HCT116 (cell line): ENCODE measurements at regions of chr20 and their contacts with region 1.

Region 1: GRCh38 chr20:57654363-57654997 is 34.3 kb upstream of the ZBP1 start:
- DNase-seq: peak; percentile 23
- ATAC-seq: peak; percentile 95
- H3K4me3 ChIP-seq: no peak overlapping the region
- H3K27ac ChIP-seq: no peak overlapping the region
- H3K4me1 ChIP-seq: no peaks in the 10 kb centered on the region
- H3K27me3 ChIP-seq: peaks cover 14% of the 10 kb centered on the region; the same call in 1 of the 2 replicates
- CTCF ChIP-seq: peak; percentile 65 to 85 (median 77); a peak in 5 of 6 replicates
- POLR2A ChIP-seq: no peak
- RAD21 ChIP-seq: peak; percentile 85

Region 2: GRCh38 chr20:57369596-57370325 is 284.7 kb before region 1 on chr20:
- CTCF ChIA-PET with region 1: no interaction called
- POLR2A ChIA-PET with region 1: no interaction called
- RAD21 ChIA-PET with region 1: no interaction called
- intact Hi-C with region 1: no loop called
- DNase-seq: no peak
- ATAC-seq: no peak
- H3K4me3 ChIP-seq: no peak overlapping the region
- H3K27ac ChIP-seq: no peak overlapping the region
- H3K4me1 ChIP-seq: no peaks in the 10 kb centered on the region
- H3K27me3 ChIP-seq: no peaks in the 10 kb centered on the region
- CTCF ChIP-seq: no peak
- POLR2A ChIP-seq: no peak
- RAD21 ChIP-seq: no peak

Region 3: DNA sequence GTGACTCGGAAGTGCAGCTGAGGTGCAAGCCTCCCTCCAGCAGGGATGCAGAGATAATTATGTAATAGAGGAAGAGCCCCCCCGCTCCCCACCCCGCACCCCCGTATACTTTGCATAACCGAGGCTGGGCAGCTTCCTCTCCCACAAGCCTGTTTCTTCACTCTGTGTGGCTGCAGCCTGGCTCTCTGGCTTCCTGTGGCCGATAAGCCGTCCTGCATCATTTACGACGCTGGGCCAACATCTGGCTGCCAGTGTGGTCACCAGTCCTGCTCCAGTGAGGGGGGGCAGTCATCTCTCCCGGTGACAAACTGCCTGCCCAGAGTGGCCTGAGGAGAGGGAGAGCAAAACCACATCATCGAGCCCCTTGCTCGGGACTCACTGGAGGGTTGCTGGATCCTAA is 204.1 kb before region 1 on chr20:
- CTCF ChIA-PET with region 1: no interaction called
- POLR2A ChIA-PET with region 1: no interaction called
- RAD21 ChIA-PET with region 1: no interaction called
- intact Hi-C with region 1: no loop called
- DNase-seq: no peak
- ATAC-seq: no peak
- H3K4me3 ChIP-seq: no peak overlapping the region
- H3K27ac ChIP-seq: no peak overlapping the region
- H3K4me1 ChIP-seq: peaks cover 7 to 8% of the 10 kb centered on the region in 2 experiments; a peak in 2 of 4 replicates
- H3K27me3 ChIP-seq: peaks cover 10% of the 10 kb centered on the region; the same call in 1 of the 2 replicates
- CTCF ChIP-seq: no peak
- POLR2A ChIP-seq: no peak
- RAD21 ChIP-seq: no peak

Region 4: GRCh38 chr20:58028123-58028522 is 373.6 kb after region 1 on chr20:
- CTCF ChIA-PET with region 1: no interaction called
- POLR2A ChIA-PET with region 1: no interaction called
- RAD21 ChIA-PET with region 1: no interaction called
- intact Hi-C with region 1: loop called (anchors 5 kb)
- DNase-seq: no peak
- ATAC-seq: no peak
- H3K4me3 ChIP-seq: no peak overlapping the region
- H3K27ac ChIP-seq: no peak overlapping the region
- H3K4me1 ChIP-seq: no peaks in the 10 kb centered on the region
- H3K27me3 ChIP-seq: peaks cover 45% of the 10 kb centered on the region
- CTCF ChIP-seq: peak; percentile 26 to 45 (median 42); a peak in 5 of 6 replicates
- POLR2A ChIP-seq: no peak
- RAD21 ChIP-seq: peak; percentile 65

Region 5: DNA sequence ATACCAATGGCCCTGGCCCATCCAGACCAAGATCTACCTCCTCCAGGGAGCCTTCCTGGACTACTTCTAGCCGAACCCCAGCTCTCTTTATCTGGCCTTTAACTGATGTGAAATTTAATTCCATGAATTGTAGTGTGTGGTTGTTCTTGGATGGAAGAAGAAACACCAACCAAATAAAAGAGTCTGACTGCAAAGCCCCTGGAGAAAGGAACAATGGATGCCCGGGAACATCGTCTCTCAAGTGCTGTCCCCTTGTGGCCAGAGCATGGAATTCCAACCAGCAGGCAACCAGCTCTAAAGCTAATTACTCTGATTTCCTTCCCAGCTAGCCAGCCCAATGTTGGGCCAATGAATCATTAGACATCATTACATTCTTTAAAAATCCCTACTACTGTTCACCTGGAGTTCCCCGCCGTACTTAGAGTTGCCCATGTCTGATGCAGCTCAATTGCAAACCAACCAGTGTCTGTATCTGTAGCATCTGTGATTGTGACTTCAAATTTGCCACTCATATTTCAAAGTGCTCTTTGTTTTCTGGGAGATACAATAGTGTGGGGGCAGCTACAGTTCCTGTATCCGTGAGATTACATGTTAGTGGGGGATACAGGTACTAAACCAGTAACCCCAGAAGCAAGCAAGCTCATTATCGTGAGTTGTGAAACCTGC is 432.8 kb after region 1 on chr20:
- CTCF ChIA-PET with region 1: interaction called, 22 read pairs
- POLR2A ChIA-PET with region 1: no interaction called
- RAD21 ChIA-PET with region 1: no interaction called
- intact Hi-C with region 1: loop called (anchors 1 kb)
- DNase-seq: peak; percentile 16
- ATAC-seq: peak; percentile 76
- H3K4me3 ChIP-seq: no peak overlapping the region
- H3K27ac ChIP-seq: no peak overlapping the region
- H3K4me1 ChIP-seq: no peaks in the 10 kb centered on the region
- H3K27me3 ChIP-seq: peaks cover 21% of the 10 kb centered on the region
- CTCF ChIP-seq: peak; percentile 64 to 96 (median 91); a peak in 5 of 6 replicates
- POLR2A ChIP-seq: no peak
- RAD21 ChIP-seq: peak; percentile 77

Region 6: DNA sequence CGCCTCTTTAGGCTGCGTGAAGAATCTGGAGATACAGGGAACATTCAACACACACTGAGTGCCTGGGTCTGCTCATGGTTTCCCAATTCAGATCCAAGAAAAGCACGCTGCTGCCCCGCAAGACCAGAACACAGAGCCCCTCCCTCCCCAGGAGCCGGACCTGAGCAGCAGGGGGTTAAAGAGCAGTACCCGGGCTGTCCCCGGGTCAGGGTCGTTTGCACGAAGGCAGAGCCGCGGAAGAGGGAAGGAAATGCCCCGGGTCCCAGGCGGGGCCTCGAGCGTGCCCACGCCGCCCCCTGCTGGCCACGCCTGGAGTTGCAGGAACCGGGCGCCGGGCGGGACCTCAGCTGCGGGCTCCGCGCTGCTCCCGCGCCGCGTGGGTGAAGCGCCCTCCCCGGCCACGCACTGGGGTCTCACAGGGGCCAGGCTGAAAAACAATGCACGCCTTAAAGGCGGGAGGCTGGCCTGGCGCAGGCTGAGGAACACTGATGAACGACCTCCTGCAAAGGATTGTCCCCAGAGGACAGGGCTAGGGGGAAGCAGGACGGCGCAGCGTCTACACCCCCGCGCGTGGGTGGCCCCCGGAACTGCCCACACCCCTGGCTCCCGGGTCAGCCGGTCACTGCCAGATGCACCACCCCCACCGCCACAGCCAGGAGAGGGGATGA is 525.1 kb after region 1 on chr20:
- CTCF ChIA-PET with region 1: interaction called, 3 read pairs
- POLR2A ChIA-PET with region 1: no interaction called
- RAD21 ChIA-PET with region 1: no interaction called
- intact Hi-C with region 1: loop called (anchors 1 kb)
- DNase-seq: no peak
- ATAC-seq: peak; percentile 94
- H3K4me3 ChIP-seq: peak overlapping the region; percentile 32 to 50
- H3K27ac ChIP-seq: no peak overlapping the region
- H3K4me1 ChIP-seq: peaks cover 0 to 11% of the 10 kb centered on the region in 2 experiments; a peak in 2 of 4 replicates
- H3K27me3 ChIP-seq: no peaks in the 10 kb centered on the region; the same call in 1 of the 2 replicates
- CTCF ChIP-seq: peak; percentile 71 to 93 (median 89); a peak in 5 of 6 replicates
- POLR2A ChIP-seq: no peak
- RAD21 ChIP-seq: peak; percentile 89